PC-9 (cell line): ENCODE measurements at regions of chr22 and their contacts with region 1.

Region 1: GRCh38 chr22:37953437-37954179 is at the starts of genes C22orf23 and POLR2F:
- DNase-seq: peak; percentile 91 to 96
- H3K4me3 ChIP-seq: peak within 1 kb of the TSS; percentile 68
- H3K27ac ChIP-seq: peak within 1 kb of the TSS; percentile 1; the same call in 1 of the 2 replicates
- H3K4me1 ChIP-seq: peaks cover 18% of the 10 kb centered on the region
- H3K27me3 ChIP-seq: no peaks in the 10 kb centered on the region
- CTCF ChIP-seq: no peak
- total RNA-seq, gene C22orf23: 1.0 and 1.7 TPM in 2 replicates
- total RNA-seq, gene POLR2F: 147 and 180 TPM in 2 replicates

Region 2: DNA sequence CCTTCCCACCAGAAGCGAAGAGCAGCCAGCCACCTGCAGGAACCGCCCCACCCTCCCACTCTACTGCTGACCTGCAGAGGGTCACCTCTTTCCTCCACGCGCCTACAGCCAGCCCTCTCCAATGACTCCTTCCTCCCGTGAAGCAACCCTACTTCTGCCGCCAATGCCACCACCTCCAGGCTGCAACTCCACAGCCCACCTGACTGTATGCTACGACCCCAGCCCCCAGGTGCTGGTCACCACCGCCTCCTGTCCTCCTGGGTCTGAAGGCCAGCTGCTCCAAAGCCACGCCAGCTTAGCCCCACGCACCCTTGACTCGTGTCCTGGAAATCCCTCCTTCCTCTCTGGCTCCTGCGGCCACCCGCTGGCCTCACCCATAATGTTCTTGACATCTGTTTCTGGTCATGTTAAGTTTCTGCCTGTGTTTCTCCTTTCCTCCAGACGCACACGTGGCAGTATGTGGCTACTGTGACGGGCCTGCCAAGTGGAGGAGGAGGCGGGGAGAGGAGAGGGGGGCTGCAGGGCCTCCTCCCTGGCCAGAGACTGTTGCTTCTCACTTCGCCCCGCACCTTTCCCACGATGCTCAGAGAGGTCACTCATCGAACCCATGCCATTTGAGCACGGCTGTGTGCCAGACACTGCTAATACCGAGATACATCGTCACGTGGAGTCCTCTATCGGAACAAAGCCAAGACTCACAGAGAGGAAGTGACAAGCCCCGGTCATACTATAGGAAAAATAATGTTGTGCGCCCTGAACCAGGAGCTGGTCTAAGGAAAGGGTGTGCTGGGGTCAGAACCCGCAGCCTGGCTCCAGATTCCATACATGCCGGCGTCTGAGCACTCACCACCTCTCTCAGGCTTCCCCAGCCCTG is 777.2 kb before region 1 on chr22:
- CTCF ChIA-PET with region 1: no interaction called
- POLR2A ChIA-PET with region 1: no interaction called
- intact Hi-C with region 1: no loop called
- DNase-seq: no peak
- H3K4me3 ChIP-seq: no peak overlapping the region
- H3K27ac ChIP-seq: no peak overlapping the region
- H3K4me1 ChIP-seq: peaks cover 17% of the 10 kb centered on the region
- H3K27me3 ChIP-seq: no peaks in the 10 kb centered on the region
- CTCF ChIP-seq: no peak

Region 3: DNA sequence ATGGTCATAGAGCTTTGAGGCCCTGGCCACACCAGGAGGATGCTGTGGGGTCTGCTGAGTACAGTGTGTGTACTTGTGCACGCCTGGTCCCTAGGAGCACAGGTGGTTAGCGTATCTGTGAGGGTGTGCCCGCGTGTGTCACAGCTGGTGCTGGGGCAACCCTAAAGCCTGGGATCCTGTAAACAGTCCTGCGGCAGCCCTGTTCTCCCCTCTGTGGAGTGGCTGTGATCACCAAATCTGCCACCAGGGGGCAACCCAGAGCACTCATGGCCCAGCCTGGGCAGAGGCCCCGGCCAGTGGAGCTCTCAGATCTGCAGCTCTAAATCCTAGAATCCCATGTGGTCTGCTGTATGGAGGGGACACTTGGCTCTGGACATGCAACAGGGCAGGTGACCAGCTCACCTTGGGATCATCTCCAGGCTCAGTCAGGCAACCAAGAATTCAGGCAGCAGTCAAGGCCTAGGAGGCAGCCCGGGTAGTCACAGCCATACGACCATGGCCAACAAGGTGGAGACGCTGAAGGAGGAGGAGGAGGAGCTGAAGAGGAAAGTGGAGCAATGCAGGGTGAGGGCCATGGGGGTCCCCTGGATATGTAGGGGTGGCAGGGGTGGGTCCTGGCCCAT is 310.3 kb before region 1 on chr22:
- CTCF ChIA-PET with region 1: interaction called, 15 read pairs
- POLR2A ChIA-PET with region 1: no interaction called
- intact Hi-C with region 1: no loop called
- DNase-seq: peak; percentile 65 to 86
- H3K4me3 ChIP-seq: no peak overlapping the region
- H3K27ac ChIP-seq: no peak overlapping the region
- H3K4me1 ChIP-seq: peaks cover 31% of the 10 kb centered on the region
- H3K27me3 ChIP-seq: no peaks in the 10 kb centered on the region
- CTCF ChIP-seq: peak; percentile 99

Region 4: DNA sequence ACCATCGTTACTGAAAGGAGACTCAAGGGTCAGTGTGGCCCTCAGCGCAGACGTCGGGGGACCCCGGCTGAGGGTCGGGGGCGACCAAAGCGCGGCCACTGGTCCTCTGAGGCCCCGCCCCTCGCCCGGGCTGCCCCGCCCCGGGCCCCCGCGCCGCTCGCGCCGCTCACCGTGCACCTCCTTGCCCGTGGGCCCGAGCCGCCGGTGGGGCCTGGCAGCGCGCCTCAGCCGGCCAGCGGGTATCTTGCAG is 109.9 kb before region 1 on chr22:
- CTCF ChIA-PET with region 1: no interaction called
- POLR2A ChIA-PET with region 1: no interaction called
- intact Hi-C with region 1: loop called (anchors 5 kb)
- DNase-seq: no peak
- H3K4me3 ChIP-seq: peak overlapping the region; percentile 92
- H3K27ac ChIP-seq: peak overlapping the region; percentile 35
- H3K4me1 ChIP-seq: peaks cover 23% of the 10 kb centered on the region
- H3K27me3 ChIP-seq: no peaks in the 10 kb centered on the region
- CTCF ChIP-seq: no peak

Region 5: DNA sequence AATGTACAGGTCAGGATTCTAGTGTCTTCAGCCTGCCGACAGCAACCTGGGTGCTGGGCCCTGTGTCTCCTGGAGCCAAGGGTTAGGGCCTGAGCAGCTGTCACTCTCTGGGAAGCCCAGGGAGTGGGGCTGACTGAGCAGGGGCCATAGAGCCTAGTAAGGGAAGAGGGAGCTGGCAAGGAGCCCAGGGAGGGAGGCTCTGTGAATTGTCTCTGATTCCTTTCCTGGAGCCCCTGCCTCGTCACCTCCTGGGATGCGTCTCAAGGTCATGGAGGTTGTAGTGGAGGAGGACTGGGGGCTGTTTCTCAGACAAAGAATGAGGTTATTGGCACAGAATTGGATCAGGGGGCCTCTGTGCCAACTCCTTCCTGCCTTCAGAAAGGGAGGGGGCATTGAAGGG is 18.9 kb after region 1 on chr22:
- CTCF ChIA-PET with region 1: interaction called, 11 read pairs
- POLR2A ChIA-PET with region 1: interaction called, 17 read pairs
- intact Hi-C with region 1: no loop called
- DNase-seq: no peak
- H3K4me3 ChIP-seq: no peak overlapping the region
- H3K27ac ChIP-seq: no peak overlapping the region
- H3K4me1 ChIP-seq: no peaks in the 10 kb centered on the region
- H3K27me3 ChIP-seq: no peaks in the 10 kb centered on the region
- CTCF ChIP-seq: no peak

Region 6: GRCh38 chr22:38004316-38004715 is 50.7 kb after region 1 on chr22:
- CTCF ChIA-PET with region 1: no interaction called
- POLR2A ChIA-PET with region 1: no interaction called
- intact Hi-C with region 1: no loop called
- DNase-seq: no peak
- H3K4me3 ChIP-seq: no peak overlapping the region
- H3K27ac ChIP-seq: no peak overlapping the region
- H3K4me1 ChIP-seq: peaks cover 15% of the 10 kb centered on the region
- H3K27me3 ChIP-seq: no peaks in the 10 kb centered on the region
- CTCF ChIP-seq: no peak

Region 7: DNA sequence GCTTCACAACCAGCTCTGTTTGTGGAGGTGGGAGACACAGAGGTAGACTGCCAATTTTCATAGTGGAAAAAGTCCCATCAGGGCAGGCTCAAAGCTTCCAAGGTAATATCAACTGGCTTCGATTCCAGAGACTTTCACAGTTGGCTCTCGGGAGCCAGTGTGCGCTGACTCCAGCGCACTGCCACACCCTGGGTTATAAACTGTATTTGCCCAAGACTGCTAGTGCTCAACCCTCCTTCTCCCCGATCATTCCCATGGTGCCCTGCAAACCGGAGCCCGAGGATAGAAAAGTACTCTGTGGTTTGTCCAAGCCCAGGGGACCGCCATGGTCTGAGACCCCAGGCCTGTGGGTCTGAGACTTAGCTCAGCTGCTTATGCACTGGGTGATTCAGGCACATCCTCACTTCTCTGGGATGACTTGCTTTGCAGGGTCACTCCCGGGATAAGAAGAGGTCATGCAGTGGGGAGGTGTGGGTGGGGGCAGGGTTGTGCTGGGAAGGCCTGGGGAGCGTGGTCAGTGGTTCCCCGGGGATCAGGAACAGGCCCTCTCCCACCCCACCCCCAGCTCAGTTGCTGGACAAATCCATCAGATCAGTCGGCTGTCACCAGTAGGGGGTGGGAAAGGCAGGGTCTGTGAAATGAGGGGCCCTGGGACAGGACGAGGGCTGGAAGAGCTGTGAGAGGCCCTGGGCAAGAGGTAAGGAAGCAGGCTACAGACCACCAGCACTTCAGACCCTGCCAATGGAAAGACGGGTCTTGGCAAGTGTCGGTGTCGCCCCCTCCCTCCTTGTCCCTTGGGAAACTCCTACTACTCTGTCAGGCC is 76.9 kb after region 1 on chr22:
- CTCF ChIA-PET with region 1: no interaction called
- POLR2A ChIA-PET with region 1: no interaction called
- intact Hi-C with region 1: no loop called
- DNase-seq: no peak
- H3K4me3 ChIP-seq: no peak overlapping the region
- H3K27ac ChIP-seq: no peak overlapping the region
- H3K4me1 ChIP-seq: peaks cover 13% of the 10 kb centered on the region
- H3K27me3 ChIP-seq: peaks cover 17% of the 10 kb centered on the region; the same call in 1 of the 2 replicates
- CTCF ChIP-seq: no peak

Region 8: DNA sequence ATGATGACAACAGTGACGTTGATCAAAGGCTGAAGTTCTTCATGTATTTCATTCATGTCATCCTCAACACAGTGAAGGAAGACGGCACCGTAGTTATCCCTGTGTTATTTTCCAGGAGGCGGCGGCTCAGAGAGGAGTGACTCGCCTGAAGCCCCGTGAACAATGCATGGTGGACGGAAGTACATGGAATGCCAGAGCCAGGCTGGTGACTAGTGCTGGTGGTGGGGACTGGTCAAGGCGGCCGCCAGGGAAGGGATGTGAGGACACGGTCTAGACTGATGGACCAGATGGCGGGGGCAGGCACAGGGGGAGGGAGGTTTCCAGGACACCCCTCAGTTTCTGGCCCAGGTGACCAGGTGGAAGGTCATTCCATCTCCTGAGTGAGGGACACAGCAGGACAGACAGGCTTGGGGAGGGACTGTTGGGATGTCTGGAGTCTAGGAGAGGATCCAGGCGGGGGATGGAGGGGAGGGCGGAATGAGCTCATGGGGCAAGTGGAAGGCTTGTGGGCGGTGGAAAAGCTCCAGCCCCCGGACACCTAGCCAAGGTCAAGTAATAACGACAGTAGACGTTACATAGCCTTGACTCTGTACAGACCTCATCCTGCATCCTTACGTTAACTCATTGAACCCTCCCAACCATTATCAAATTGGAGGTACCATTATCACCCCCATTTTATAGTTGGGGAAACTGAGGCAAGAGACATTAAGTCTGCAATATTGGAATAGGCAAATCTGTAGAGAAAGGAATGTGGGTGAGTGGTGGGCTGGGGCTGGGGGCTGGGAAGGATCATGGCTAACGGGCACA is 87.5 kb after region 1 on chr22:
- CTCF ChIA-PET with region 1: no interaction called
- POLR2A ChIA-PET with region 1: interaction called, 11 read pairs
- intact Hi-C with region 1: no loop called
- DNase-seq: no peak
- H3K4me3 ChIP-seq: no peak overlapping the region
- H3K27ac ChIP-seq: no peak overlapping the region
- H3K4me1 ChIP-seq: no peaks in the 10 kb centered on the region
- H3K27me3 ChIP-seq: no peaks in the 10 kb centered on the region
- CTCF ChIP-seq: no peak

Region 9: DNA sequence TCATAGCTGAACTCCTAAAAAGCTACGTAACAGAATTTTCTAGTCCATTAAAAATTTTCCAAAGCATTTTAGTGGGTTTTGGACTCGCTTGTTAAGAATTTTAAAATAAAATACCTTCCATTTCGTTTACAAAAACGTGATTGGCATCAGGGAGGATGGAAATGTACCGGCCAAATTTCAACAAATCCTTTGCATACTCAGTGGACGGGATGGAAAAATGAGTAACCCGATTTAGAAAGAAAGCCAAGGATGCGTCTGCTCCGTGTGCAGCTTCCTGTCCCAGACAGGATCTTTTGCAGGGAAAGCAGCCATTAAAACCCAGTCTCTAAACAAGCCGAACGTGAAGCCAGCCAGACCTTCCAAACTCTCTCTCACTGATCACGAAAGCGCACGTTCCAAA is 303.6 kb after region 1 on chr22:
- CTCF ChIA-PET with region 1: no interaction called
- POLR2A ChIA-PET with region 1: no interaction called
- intact Hi-C with region 1: no loop called
- DNase-seq: no peak
- H3K4me3 ChIP-seq: no peak overlapping the region
- H3K27ac ChIP-seq: no peak overlapping the region
- H3K4me1 ChIP-seq: no peaks in the 10 kb centered on the region
- H3K27me3 ChIP-seq: no peaks in the 10 kb centered on the region
- CTCF ChIP-seq: no peak